ENCODE measurements at regions of chr19 and their contacts with region 1.

Region 1: DNA sequence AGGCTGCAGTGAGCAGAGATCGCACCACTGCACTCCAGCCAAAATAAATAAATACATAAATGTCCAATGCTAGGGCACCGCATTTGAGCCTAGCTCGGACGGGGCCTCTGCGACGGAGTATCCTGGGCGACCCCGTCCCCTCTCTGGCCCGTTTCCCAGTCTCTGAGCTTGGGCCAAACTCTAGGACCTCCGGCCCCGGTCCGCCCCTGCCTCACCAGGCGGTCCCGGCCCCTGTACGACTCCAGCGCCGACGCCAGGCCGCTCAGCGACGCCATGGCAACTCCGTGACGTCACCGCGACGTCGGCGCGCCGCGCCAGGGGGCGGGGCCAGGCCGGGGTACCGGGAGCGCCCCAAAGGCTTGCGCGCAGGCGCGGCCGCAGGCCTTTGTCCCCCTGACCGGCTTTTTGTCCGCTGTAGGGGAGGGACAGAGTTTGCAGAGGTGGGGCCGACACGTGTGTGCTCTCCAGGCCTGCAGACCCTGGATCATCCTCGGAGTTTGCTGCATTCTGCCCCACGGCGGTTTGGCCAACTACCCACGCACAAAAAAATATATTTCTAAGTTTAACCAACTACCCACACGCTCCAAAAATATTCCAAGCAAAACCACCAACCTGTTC is at the start of gene PEX11G:
- DNase-seq: peak; percentile 73 to 81
- ATAC-seq: peak; percentile 94 to 95
- H3K4me3 ChIP-seq: peak within 1 kb of the TSS; percentile 65 to 87 (median 67)
- H3K27ac ChIP-seq: peak within 1 kb of the TSS; percentile 73 to 90 (median 84)
- H3K4me1 ChIP-seq: peaks cover under 1 to 8% of the 10 kb centered on the region in 2 donors
- H3K27me3 ChIP-seq: no peaks in the 10 kb centered on the region
- CTCF ChIP-seq: no peak
- POLR2A ChIP-seq: peak; percentile 52 to 62
- total RNA-seq, gene PEX11G: 0.51 to 1.4 (median 1.1) TPM in 3 of 4 donors, not detected in the other

Region 2: GRCh38 chr19:6801485-6802086 is 687.3 kb before region 1 on chr19:
- in situ Hi-C with region 1: no loop called
- intact Hi-C with region 1: no loop called
- DNase-seq: peak; percentile 28 to 46
- ATAC-seq: no peak
- H3K4me3 ChIP-seq: peak overlapping the region in 2 of 4 donors; percentile 17 to 24
- H3K27ac ChIP-seq: no peak overlapping the region
- H3K4me1 ChIP-seq: no peaks in the 10 kb centered on the region
- H3K27me3 ChIP-seq: peaks cover 0 to 11% (median 7%) of the 10 kb centered on the region in 3 donors
- CTCF ChIP-seq: no peak
- POLR2A ChIP-seq: no peak

Region 3: DNA sequence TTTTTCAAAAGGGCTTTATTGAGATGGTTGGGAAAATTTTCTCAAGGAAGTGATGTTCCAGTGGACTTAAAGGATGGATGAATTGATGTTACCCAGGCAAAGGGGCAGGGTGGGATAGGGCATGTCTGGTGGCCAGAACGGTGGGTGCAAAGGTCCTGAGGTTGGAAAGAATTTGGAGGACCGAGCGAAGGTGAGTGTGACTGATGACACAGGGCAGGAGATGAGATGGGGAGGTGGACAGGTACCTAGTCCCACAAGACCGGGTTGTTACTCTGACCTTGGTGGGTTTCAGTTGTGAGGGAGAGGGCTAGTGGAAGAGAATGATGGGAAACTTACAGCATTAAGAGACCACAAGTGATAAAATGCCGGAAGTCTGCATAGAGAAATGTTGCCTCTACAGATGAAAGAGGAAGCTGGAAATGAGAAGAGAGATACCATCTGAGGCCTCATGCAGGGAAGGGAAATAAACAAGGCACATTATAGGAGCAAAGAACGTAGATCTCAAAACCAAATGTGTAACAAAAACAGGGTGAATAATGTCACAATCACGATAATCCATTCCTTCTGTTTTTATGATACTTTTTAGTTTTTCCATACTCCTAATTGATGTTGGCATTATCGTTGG is 597.0 kb before region 1 on chr19:
- in situ Hi-C with region 1: no loop called
- intact Hi-C with region 1: no loop called
- DNase-seq: no peak
- ATAC-seq: no peak
- H3K4me3 ChIP-seq: no peak overlapping the region
- H3K27ac ChIP-seq: no peak overlapping the region
- H3K4me1 ChIP-seq: no peaks in the 10 kb centered on the region
- H3K27me3 ChIP-seq: no peaks in the 10 kb centered on the region
- CTCF ChIP-seq: no peak
- POLR2A ChIP-seq: no peak

Region 4: DNA sequence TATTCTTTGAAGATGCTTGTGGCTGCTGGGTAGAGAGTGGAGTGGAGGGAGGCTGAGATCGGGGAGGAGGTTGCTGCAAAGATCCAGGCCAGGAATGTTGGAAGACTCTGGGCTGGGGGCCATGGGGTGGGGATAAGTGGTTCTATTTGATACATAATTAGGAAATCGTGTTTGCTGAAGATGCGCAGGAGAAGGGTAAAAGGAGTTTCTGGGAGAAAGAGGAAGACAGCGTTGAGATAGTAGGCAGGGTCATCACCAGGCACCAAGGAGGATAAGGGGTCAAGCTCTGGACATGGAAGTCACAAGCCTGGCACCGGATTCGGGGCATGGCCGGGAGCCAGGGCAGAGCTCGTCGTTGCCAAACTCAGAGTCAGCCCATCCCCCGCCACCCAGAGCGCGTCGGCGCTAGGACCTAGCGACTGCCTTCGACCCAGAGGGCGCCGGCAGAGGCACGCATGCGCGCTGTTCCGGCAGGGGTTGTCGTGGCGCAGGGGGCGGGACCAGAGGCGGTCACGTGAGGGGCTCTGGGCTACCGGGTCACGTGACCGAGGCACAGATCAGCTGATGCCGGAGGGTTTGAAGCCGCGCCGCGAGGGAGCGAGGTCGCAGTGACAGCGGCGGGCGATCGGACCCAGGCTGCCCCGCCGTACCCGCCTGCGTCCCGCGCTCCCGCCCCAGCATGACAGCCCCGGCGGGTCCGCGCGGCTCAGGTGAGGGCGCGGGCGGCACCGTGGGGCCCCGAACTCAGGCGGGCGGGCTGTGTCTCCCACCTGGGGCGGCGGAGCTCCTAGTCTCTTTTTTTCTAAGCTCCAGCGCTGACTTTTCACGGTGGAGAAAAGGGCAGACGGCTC is 33.5 kb after region 1 on chr19 and contains the start of gene MCOLN1:
- in situ Hi-C with region 1: no loop called
- intact Hi-C with region 1: loop called (anchors 2 kb)
- DNase-seq: peak; percentile 99
- ATAC-seq: peak; percentile 92 to 93
- H3K4me3 ChIP-seq: peak within 1 kb of the TSS; percentile 67 to 95 (median 85)
- H3K27ac ChIP-seq: peak within 1 kb of the TSS; percentile 48 to 84 (median 70)
- H3K4me1 ChIP-seq: peaks cover 15 to 19% of the 10 kb centered on the region in 2 donors
- H3K27me3 ChIP-seq: no peaks in the 10 kb centered on the region
- CTCF ChIP-seq: peak in 2 of 5 experiments; percentile 66 to 73
- POLR2A ChIP-seq: peak; percentile 52 to 71
- total RNA-seq, gene MCOLN1: 9.2 to 13.6 (median 11.5) TPM

Region 5: DNA sequence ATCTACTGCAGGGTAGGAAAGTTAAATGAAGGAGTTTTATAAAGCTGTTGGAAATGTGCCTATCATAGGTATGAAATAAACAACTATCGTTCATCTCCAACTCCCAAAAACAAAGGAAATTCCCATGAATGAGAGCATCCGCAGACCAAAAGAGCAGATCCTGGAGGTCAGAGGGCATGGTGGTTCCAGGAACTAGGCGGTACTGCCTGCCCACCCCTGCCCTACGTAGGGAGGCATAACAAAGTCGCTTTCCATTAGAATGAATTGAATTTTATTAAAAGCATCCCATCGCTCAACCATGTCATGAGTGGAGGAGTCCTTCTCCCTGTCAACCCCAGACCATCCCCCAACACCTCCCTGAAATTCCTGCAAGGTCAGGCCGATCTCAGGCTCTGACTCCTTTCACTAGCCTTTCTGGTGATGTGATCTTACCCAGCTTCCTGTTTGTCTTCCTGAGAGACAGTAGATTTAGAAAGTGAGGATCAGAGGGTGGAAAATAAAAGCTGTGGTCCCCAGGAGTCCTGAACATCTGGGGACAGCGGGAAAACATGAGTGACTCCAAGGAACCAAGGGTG is 274.0 kb after region 1 on chr19 and contains the start of gene CLEC4M:
- in situ Hi-C with region 1: no loop called
- intact Hi-C with region 1: no loop called
- DNase-seq: no peak
- ATAC-seq: no peak
- H3K4me3 ChIP-seq: no peak within 1 kb of the TSS
- H3K27ac ChIP-seq: no peak within 1 kb of the TSS
- H3K4me1 ChIP-seq: no peaks in the 10 kb centered on the region
- H3K27me3 ChIP-seq: no peaks in the 10 kb centered on the region
- CTCF ChIP-seq: no peak
- POLR2A ChIP-seq: no peak
- total RNA-seq, gene CLEC4M: not detected

Measured in gastrocnemius medialis (tissue), 4 donors.